AG04449 (cell line): ENCODE measurements at regions of chr9 and their contacts with region 1.

Region 1: GRCh38 chr9:34403554-34404380 is 27.1 kb upstream of the MYORG start:
- DNase-seq: no peak
- H3K4me3 ChIP-seq: no peak overlapping the region
- CTCF ChIP-seq: peak; percentile 92

Region 2: GRCh38 chr9:34332076-34332964 is 71.4 kb before region 1 on chr9:
- CTCF ChIA-PET with region 1: interaction called, 36 read pairs
- POLR2A ChIA-PET with region 1: no interaction called
- DNase-seq: no peak
- H3K4me3 ChIP-seq: no peak overlapping the region
- CTCF ChIP-seq: peak; percentile 35

Region 3: GRCh38 chr9:34419716-34420504 is 16.1 kb after region 1 on chr9:
- CTCF ChIA-PET with region 1: interaction called, 83 read pairs
- POLR2A ChIA-PET with region 1: no interaction called
- DNase-seq: no peak
- H3K4me3 ChIP-seq: no peak overlapping the region
- CTCF ChIP-seq: no peak

Region 4: DNA sequence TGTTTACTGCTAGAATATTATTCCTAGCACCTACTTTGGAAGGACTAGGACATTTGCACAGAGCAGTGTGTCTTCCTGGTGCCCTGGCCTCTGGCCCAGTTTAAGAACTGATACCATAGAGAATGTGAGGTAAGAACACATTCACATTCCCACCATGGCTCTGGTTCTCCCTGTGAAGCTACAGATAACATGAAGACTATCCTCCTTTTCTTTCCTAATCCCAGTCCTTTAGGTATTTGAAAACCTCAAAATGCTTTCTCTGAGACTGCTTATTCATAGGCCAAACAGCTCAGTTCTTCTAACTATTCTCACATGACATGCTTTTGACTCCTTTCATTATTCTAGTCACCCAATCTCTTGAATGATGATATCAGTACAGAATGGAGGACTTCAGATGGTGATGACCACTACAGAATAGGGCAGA is 42.7 kb after region 1 on chr9:
- CTCF ChIA-PET with region 1: interaction called, 17 read pairs
- POLR2A ChIA-PET with region 1: interaction called, 3 read pairs
- DNase-seq: no peak
- H3K4me3 ChIP-seq: no peak overlapping the region
- CTCF ChIP-seq: no peak

Region 5: GRCh38 chr9:34493972-34494535 is 90.3 kb after region 1 on chr9:
- CTCF ChIA-PET with region 1: interaction called, 193 read pairs
- POLR2A ChIA-PET with region 1: no interaction called
- DNase-seq: no peak
- H3K4me3 ChIP-seq: no peak overlapping the region
- CTCF ChIP-seq: no peak

Region 6: GRCh38 chr9:34536685-34537084 is 132.9 kb after region 1 on chr9:
- CTCF ChIA-PET with region 1: interaction called, 12 read pairs
- POLR2A ChIA-PET with region 1: no interaction called
- DNase-seq: no peak
- H3K4me3 ChIP-seq: no peak overlapping the region
- CTCF ChIP-seq: no peak

Region 7: GRCh38 chr9:34603610-34604231 is 200.0 kb after region 1 on chr9:
- CTCF ChIA-PET with region 1: interaction called, 56 read pairs
- POLR2A ChIA-PET with region 1: no interaction called
- DNase-seq: no peak
- H3K4me3 ChIP-seq: no peak overlapping the region
- CTCF ChIP-seq: peak; percentile 88